ENCODE measurements at regions of chr5 and their contacts with region 1.

Region 1: DNA sequence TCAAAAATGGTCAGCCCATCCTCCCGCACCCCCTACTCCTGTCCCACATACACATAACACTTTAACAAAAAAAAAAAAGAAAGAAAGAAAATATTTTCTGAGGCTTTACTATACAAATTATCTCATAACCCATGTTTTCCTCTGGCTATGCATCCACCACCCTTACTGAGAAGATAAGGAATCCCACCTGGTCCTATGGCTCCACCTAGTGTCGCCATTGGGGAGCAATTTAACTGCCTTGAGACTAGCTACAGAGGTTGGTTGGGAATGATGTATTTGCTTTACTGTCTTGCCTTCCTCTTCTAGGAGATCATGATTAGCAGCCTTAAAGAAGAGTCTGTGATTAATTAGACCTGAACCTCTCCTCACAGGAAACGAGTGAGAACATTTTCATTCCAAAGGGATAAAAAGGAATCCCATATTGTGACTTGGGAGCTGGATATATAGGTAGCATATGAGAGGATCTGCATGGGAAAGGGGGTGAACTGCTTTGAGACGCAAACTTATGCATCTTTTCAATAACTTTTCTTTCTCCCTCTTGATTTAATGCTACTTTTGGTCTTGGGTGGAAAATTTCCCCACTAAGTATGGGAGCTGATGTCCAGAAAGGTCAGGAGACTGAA is 77.7 kb upstream of the SELENOP start:
- DNase-seq: peak; percentile 72
- ATAC-seq: peak; percentile 97
- H3K4me3 ChIP-seq: no peak overlapping the region
- H3K27ac ChIP-seq: no peak overlapping the region
- H3K4me1 ChIP-seq: no peaks in the 10 kb centered on the region
- H3K27me3 ChIP-seq: peaks cover 10% of the 10 kb centered on the region
- CTCF ChIP-seq: peak; percentile 93

Region 2: DNA sequence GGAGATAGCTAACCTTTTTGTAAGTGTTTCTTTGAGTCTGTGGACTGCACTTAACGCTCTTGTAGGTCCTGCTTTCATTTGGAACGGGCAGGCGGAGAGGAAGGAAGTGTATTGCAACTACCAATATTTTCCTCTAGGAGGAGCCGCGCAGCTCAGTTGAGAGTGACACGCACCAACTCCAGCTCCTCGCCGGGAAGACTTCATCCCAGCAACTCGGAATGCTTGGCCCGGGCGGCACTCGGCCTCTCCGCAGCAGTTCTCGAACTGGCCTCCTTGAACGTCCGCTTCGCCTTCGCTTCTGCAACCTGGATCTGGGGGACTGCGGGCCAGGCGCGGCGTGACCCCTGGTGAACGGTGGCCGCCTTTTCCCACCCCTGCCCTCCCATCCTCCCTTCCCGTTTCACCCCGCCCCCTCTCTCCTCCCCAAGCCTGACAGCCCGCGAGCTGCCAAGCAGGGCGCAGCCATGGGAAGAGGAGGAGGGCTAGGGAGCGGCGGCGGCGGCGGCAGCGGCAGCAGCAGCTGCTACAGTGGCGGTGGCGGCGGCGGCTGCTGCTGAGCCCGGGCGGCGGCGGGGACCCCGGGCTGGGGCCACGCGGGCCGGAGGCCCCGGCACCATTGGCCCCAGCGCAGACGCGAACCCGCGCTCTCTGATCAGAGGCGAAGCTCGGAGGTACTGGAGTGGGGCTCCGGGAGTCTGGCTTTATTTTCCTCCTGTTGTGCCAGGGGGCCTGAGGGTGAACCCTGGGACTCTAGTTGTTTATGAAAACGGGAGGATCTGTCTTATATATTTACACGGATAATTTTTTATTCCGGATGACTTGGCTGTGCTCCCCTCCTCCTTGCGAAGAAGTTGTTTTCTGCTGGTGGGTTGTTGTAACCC is 465.9 kb before region 1 on chr5 and contains the start of gene GHR:
- CTCF ChIA-PET with region 1: no interaction called
- POLR2A ChIA-PET with region 1: no interaction called
- in situ Hi-C with region 1: no loop called
- intact Hi-C with region 1: loop called (anchors 10 kb)
- DNase-seq: peak; percentile 58
- ATAC-seq: peak; percentile 97
- H3K4me3 ChIP-seq: peak within 1 kb of the TSS; percentile 38 to 50
- H3K27ac ChIP-seq: no peak within 1 kb of the TSS
- H3K4me1 ChIP-seq: peaks cover 7% of the 10 kb centered on the region
- H3K27me3 ChIP-seq: peaks cover 7% of the 10 kb centered on the region
- CTCF ChIP-seq: peak; percentile 85
- total RNA-seq, gene GHR: 0.05 TPM

Region 3: GRCh38 chr5:42583322-42583721 is 306.1 kb before region 1 on chr5:
- CTCF ChIA-PET with region 1: interaction called, 3 read pairs
- POLR2A ChIA-PET with region 1: no interaction called
- in situ Hi-C with region 1: no loop called
- intact Hi-C with region 1: loop called (anchors 10 kb)
- DNase-seq: peak; percentile 35
- ATAC-seq: peak; percentile 63
- H3K4me3 ChIP-seq: no peak overlapping the region
- H3K27ac ChIP-seq: no peak overlapping the region
- H3K4me1 ChIP-seq: no peaks in the 10 kb centered on the region
- H3K27me3 ChIP-seq: no peaks in the 10 kb centered on the region; the same call in 1 of the 2 replicates
- CTCF ChIP-seq: peak; percentile 86

Region 4: GRCh38 chr5:42767491-42768105 is 121.8 kb before region 1 on chr5:
- CTCF ChIA-PET with region 1: interaction called, 3 read pairs
- POLR2A ChIA-PET with region 1: no interaction called
- in situ Hi-C with region 1: no loop called
- intact Hi-C with region 1: loop called (anchors 1 kb)
- DNase-seq: peak; percentile 18
- ATAC-seq: 0 out of 2 replicates have a peak, but pooled peaks have one; percentile 58
- H3K4me3 ChIP-seq: no peak overlapping the region
- H3K27ac ChIP-seq: no peak overlapping the region
- H3K4me1 ChIP-seq: no peaks in the 10 kb centered on the region
- H3K27me3 ChIP-seq: peaks cover 5% of the 10 kb centered on the region
- CTCF ChIP-seq: peak; percentile 63; the same call in 1 of the 2 replicates

Region 5: GRCh38 chr5:42960506-42960905 is 71.1 kb after region 1 on chr5:
- CTCF ChIA-PET with region 1: no interaction called
- POLR2A ChIA-PET with region 1: no interaction called
- in situ Hi-C with region 1: no loop called
- intact Hi-C with region 1: no loop called
- DNase-seq: no peak
- ATAC-seq: no peak
- H3K4me3 ChIP-seq: no peak overlapping the region
- H3K27ac ChIP-seq: no peak overlapping the region
- H3K4me1 ChIP-seq: no peaks in the 10 kb centered on the region
- H3K27me3 ChIP-seq: no peaks in the 10 kb centered on the region
- CTCF ChIP-seq: no peak

Region 6: DNA sequence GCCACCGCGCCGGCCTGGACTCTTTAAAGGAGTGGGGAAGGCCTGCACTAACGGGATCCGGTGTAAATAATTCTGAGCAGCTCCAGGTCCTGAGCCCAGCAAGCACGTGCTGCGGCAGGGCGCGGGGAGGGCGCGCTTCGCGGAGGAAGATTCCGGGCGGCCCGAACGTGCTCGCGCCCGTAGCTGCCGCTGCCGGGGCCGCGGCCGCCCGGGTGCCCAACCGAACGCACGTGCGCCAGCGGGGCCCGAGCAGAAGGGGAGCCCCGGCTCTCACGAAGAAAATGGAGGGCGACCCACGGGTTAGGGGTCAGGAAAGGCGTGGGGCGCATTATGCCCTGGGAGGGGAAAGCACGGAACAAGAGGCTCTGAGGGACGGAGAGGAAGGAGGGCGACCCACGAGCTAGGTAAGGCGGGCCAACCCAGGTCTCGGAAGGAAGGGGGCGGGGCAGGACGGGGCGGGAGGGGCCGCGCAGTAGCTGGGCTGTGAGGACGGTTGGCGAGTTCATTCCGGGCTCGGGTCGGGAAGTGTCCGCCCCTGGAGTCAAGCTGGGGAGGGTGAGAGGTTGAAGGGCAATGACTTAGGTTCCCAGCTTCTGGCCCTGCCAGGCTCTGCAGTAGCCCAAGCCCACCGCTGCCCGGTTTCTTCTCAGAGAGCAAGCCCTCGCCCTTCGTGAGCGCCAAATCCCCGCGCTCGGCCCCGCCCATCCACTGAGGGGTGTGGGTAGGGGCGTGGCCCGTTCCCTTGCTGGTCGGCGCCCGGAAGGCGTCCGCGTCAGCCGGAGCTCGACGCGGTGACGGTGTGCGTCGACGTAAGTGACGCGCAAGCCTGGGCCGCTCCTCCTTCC is 231.5 kb after region 1 on chr5 and contains the start of gene ZNF131:
- CTCF ChIA-PET with region 1: no interaction called
- POLR2A ChIA-PET with region 1: no interaction called
- in situ Hi-C with region 1: no loop called
- intact Hi-C with region 1: no loop called
- DNase-seq: peak; percentile 94
- ATAC-seq: peak; percentile 99
- H3K4me3 ChIP-seq: peak within 1 kb of the TSS; percentile 84 to 96
- H3K27ac ChIP-seq: peak within 1 kb of the TSS; percentile 95
- H3K4me1 ChIP-seq: peaks cover 16% of the 10 kb centered on the region
- H3K27me3 ChIP-seq: no peaks in the 10 kb centered on the region
- CTCF ChIP-seq: no peak
- total RNA-seq, gene ZNF131: 47.3 TPM